Psoas muscle (tissue), 8 donors: ENCODE measurements at regions of chr7 and their contacts with region 1.

Region 1: GRCh38 chr7:305410-306151 is 15.6 kb downstream of the FOXL3 start:
- DNase-seq: no peak
- ATAC-seq: no peak
- H3K4me3 ChIP-seq: no peak overlapping the region
- H3K27ac ChIP-seq: no peak overlapping the region
- H3K4me1 ChIP-seq: no peaks in the 10 kb centered on the region
- H3K27me3 ChIP-seq: peaks cover 0 to 7% (median 3%) of the 10 kb centered on the region in 3 donors
- CTCF ChIP-seq: no peak

Region 2: DNA sequence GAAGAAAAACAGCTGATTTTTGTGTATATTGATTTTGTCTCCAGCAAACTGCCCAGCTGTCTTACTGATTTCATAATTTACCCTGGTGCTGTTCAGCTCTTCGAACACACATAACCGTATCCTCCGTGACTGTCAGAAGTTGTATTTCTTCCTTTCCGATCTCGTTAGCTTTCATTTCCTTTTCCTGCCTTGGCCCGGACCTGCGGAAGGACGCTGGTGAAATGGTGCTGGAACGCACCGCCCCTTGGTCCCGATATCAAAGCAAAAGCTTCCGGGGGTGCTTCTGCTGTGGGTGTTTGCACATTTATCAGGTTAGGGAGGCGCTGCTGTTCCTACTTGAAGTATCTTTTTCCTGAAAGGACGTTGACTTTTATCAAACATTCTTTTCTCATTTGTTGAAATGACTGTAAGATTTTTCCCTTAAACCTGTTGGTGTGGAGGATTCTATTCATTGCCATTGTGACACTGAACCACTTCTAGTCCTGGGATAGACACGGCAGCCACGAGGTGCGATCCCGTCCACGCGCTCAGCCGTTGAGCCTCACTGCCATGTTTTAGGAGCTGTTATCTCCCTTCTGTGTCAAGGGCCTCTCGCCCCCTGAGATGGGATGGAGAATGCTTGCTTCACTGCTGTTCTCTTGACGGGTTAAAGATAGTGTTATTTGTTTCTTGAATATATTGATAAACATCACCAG is 57.0 kb after region 1 on chr7:
- intact Hi-C with region 1: loop called in 1 of 2 experiments (anchors 10 kb)
- DNase-seq: peak; percentile 14 to 49
- ATAC-seq: no peak
- H3K4me3 ChIP-seq: no peak overlapping the region
- H3K27ac ChIP-seq: no peak overlapping the region
- H3K4me1 ChIP-seq: no peaks in the 10 kb centered on the region
- H3K27me3 ChIP-seq: peaks cover 0 to 67% (median 15%) of the 10 kb centered on the region in 3 donors
- CTCF ChIP-seq: no peak